Activated CD8-positive, alpha-beta T cell treated with anti-CD3 and anti-CD28 coated beads for 36 hours (primary cell): ENCODE measurements at regions of chr7 and their contacts with region 1.

Region 1: GRCh38 chr7:16982640-16983350 is 101.0 kb upstream of the AGR3 start:
- DNase-seq: peak; percentile 26
- ATAC-seq: peak; percentile 65
- H3K4me3 Mint-ChIP-seq: no peak overlapping the region
- H3K27ac Mint-ChIP-seq: no peak overlapping the region
- H3K4me1 Mint-ChIP-seq: peaks cover 3% of the 10 kb centered on the region
- H3K27me3 Mint-ChIP-seq: peaks cover 5% of the 10 kb centered on the region
- CTCF ChIP-seq: peak; percentile 98

Region 2: DNA sequence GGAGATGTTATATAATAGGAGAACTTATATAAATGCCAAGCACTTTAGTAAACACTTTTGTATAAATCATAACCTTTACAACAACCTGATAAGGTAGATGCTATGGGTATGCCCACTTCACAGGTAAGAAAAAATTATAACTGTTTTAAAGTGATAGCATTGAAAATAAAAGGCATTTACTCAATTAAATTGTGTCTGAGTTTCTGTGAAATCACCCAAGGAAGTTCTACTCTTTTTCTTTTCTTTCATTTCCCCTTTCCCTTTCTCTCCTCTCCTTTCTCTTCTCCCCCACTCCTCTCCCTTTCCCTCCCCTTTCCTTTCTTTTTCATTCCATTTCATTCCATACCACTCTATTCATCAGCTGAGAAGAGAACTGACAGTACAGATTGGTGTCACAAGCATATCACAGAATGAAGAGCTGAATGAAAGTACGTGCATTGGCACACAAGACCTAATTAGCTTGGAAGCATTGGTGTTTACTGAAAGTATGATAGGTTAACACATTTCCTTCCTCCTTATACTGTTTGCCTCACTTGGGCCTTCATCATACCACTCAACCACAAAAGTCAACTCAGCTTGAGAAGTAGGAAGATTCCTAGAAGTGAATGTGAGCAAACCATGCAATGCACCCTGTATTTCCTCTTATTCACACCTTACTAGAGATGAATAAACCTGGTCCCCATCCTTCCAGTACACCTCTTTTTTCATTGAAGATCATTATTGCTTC is 16.9 kb after region 1 on chr7:
- CTCF ChIA-PET with region 1: interaction called, 10 read pairs
- POLR2A ChIA-PET with region 1: no interaction called
- intact Hi-C with region 1: no loop called
- DNase-seq: peak; percentile 20
- ATAC-seq: peak; percentile 96
- H3K4me3 Mint-ChIP-seq: peak overlapping the region; percentile 46
- H3K27ac Mint-ChIP-seq: peak overlapping the region; percentile 84
- H3K4me1 Mint-ChIP-seq: peaks cover 17% of the 10 kb centered on the region
- H3K27me3 Mint-ChIP-seq: peaks cover 2% of the 10 kb centered on the region
- CTCF ChIP-seq: no peak

Region 3: GRCh38 chr7:17009007-17009719 is 26.4 kb after region 1 on chr7:
- CTCF ChIA-PET with region 1: interaction called, 15 read pairs
- POLR2A ChIA-PET with region 1: no interaction called
- intact Hi-C with region 1: no loop called
- DNase-seq: no peak
- ATAC-seq: peak; percentile 39
- H3K4me3 Mint-ChIP-seq: no peak overlapping the region
- H3K27ac Mint-ChIP-seq: no peak overlapping the region
- H3K4me1 Mint-ChIP-seq: peaks cover 16% of the 10 kb centered on the region
- H3K27me3 Mint-ChIP-seq: peaks cover 5% of the 10 kb centered on the region
- CTCF ChIP-seq: peak; percentile 38

Region 4: DNA sequence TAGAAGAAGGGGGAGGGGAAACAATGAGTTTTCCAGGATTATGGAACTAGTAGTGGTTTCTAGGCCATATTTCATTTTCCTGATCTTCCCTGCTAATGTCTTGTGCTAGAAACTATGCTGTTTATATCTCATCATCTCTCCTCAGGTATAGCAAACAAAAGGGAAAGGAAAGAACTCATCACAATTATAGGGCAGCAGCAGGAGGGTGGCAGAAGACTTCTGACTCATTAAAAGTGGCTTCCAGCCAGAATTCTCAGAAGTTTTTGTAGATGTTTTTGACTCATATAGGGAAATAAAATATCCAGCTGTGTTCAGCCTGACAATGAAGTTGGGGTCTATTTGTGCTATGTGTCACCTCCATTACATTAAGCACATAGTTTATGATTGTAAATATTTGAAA is 322.1 kb after region 1 on chr7:
- CTCF ChIA-PET with region 1: interaction called, 20 read pairs
- POLR2A ChIA-PET with region 1: no interaction called
- intact Hi-C with region 1: no loop called
- DNase-seq: peak; percentile 52
- ATAC-seq: peak; percentile 85
- H3K4me3 Mint-ChIP-seq: peak overlapping the region; percentile 26
- H3K27ac Mint-ChIP-seq: peak overlapping the region; percentile 89
- H3K4me1 Mint-ChIP-seq: peaks cover 35% of the 10 kb centered on the region
- H3K27me3 Mint-ChIP-seq: no peaks in the 10 kb centered on the region
- CTCF ChIP-seq: no peak

Region 5: GRCh38 chr7:17530741-17531417 is 548.1 kb after region 1 on chr7:
- CTCF ChIA-PET with region 1: interaction called, 6 read pairs
- POLR2A ChIA-PET with region 1: no interaction called
- intact Hi-C with region 1: loop called (anchors 5 kb)
- DNase-seq: no peak
- ATAC-seq: no peak
- H3K4me3 Mint-ChIP-seq: no peak overlapping the region
- H3K27ac Mint-ChIP-seq: no peak overlapping the region
- H3K4me1 Mint-ChIP-seq: no peaks in the 10 kb centered on the region
- H3K27me3 Mint-ChIP-seq: peaks cover 3% of the 10 kb centered on the region
- CTCF ChIP-seq: peak; percentile 42

Region 6: GRCh38 chr7:17640730-17641377 is 658.1 kb after region 1 on chr7:
- CTCF ChIA-PET with region 1: interaction called, 4 read pairs
- POLR2A ChIA-PET with region 1: no interaction called
- intact Hi-C with region 1: loop called (anchors 10 kb)
- DNase-seq: peak; percentile 41
- ATAC-seq: peak; percentile 51
- H3K4me3 Mint-ChIP-seq: no peak overlapping the region
- H3K27ac Mint-ChIP-seq: no peak overlapping the region
- H3K4me1 Mint-ChIP-seq: no peaks in the 10 kb centered on the region
- H3K27me3 Mint-ChIP-seq: peaks cover 5% of the 10 kb centered on the region
- CTCF ChIP-seq: peak; percentile 72